ENCODE measurements at regions of chr2 and their contacts with region 1.

Region 1: DNA sequence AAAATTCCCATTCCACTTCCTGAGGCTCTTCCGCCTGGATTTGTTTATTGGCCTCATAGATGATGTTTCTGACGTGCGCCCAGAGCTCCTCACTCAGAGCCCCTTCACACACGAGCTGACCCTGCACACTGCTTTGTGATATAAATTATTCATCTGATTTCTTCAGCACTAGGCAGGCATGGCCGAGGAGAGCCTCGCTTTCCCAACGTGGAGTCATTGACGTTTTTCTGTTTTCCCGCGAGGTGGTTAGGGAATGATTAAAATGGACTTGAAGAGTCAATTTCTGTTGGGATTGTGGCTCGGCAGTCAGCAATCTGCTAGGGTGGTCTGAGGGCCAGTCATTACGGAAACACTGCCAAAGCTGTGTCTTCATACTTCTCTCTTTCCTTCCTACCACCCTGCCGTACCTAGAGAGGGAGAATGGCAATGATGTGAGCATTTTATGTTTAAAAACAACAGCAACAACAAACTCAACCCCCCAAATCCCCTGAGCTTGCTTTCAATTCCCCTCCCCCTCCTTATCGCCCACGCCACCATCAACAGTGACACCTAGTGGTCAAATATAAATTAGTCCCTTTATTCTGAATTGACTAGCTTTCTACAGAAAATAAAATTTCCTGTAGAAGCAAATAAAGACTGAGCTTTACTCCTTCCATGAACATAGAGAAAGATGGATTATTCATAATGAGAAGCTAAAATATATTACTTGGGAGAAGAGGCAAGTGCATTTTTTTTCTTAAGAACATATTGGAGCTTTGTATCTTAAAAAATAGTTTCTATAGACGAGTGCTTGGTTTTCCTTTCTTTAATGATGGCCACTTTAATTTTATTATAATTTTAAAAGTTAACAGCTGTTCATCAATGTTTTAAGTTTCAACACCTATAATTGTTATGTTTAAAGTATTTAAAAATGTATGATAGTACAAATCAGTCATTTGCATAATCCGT is 285.1 kb downstream of the MTX2 start:
- DNase-seq: no peak
- ATAC-seq: peak; percentile 49
- H3K4me3 Mint-ChIP-seq: peak overlapping the region; percentile 71
- H3K27ac Mint-ChIP-seq: no peak overlapping the region
- H3K4me1 Mint-ChIP-seq: peaks cover 11% of the 10 kb centered on the region
- H3K27me3 Mint-ChIP-seq: peaks cover 30% of the 10 kb centered on the region
- CTCF ChIP-seq: peak; percentile 80

Region 2: DNA sequence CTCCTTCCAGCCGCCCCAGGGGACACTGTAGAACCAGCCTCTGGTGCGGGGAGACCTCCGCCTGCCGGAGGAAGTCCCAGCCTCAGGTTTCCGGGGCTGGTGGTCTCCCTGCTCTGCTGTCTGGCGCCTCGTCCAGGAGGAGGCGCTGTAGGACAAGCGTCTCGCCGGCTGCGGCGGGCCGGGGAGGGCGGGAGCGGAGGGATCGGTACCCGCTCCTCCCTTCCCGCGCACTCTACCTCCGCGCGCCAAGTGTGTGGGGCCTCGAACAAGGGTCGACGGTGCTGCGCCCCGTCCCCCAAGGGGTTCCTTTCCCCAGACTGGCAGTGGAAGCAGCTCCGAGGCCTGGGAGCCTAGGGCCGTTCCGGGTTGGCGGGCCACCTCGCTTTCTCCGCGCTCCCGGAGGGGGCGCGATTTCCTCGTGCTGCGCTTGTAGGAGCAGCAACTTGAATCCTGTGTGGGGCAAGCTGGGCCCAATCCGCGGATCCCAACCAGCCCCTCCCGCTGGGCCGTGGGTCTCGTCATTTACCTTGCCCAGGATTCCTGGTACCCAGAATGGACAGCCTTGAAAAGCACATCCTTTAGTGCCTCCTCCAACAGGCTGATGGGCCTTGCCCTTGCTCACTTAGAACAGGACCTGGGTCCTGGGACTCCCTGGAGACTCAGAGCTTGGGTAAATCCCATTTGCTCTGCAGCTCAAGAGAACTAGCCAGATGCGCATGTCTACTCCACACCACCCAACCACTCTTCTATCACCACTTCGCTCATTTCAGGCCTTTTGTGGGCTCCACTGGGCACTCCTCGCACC is 413.7 kb before region 1 on chr2:
- CTCF ChIA-PET with region 1: interaction called, 15 read pairs
- POLR2A ChIA-PET with region 1: no interaction called
- intact Hi-C with region 1: loop called (anchors 1 kb)
- DNase-seq: peak; percentile 39
- ATAC-seq: peak; percentile 73
- H3K4me3 Mint-ChIP-seq: peak overlapping the region; percentile 28
- H3K27ac Mint-ChIP-seq: no peak overlapping the region
- H3K4me1 Mint-ChIP-seq: peaks cover 17% of the 10 kb centered on the region
- H3K27me3 Mint-ChIP-seq: peaks cover 74% of the 10 kb centered on the region
- CTCF ChIP-seq: no peak

Region 3: DNA sequence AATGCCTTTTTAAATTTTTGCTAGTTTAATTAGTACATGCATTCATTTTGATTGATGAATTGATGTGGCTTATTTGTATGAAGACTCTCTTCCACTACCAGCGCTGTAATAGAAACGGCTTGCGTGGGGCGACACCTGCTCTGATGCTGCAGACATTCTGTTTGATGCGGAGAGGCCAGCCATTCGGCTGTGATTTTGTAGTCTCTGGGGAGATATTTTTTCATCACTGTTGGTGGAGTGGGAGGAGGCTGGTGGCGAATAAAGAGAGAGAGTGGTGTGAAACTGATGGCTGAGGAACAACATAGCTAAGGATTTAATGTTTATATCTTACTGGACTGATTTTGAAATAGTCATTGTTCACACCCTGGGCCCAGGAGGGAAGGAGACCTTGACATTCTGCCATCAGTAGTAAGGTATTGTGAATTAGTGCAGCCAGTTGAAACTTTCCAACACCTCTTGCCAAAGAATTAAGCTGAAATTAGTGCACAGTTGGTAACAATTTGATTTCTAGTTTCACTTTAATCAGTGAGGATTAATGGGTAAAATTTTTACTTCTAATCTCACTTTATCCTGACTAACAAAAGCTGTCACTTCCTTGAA is 61.0 kb before region 1 on chr2:
- CTCF ChIA-PET with region 1: interaction called, 5 read pairs
- POLR2A ChIA-PET with region 1: no interaction called
- intact Hi-C with region 1: loop called (anchors 2 kb)
- DNase-seq: no peak
- ATAC-seq: peak; percentile 66
- H3K4me3 Mint-ChIP-seq: peak overlapping the region; percentile 35
- H3K27ac Mint-ChIP-seq: peak overlapping the region; percentile 59
- H3K4me1 Mint-ChIP-seq: peaks cover 44% of the 10 kb centered on the region
- H3K27me3 Mint-ChIP-seq: peaks cover 5% of the 10 kb centered on the region
- CTCF ChIP-seq: no peak

Region 4: GRCh38 chr2:176638167-176639015 is 84.0 kb after region 1 on chr2:
- CTCF ChIA-PET with region 1: no interaction called
- POLR2A ChIA-PET with region 1: no interaction called
- intact Hi-C with region 1: loop called (anchors 1 kb)
- DNase-seq: peak; percentile 24
- ATAC-seq: peak; percentile 79
- H3K4me3 Mint-ChIP-seq: peak overlapping the region; percentile 66
- H3K27ac Mint-ChIP-seq: no peak overlapping the region
- H3K4me1 Mint-ChIP-seq: peaks cover 3% of the 10 kb centered on the region
- H3K27me3 Mint-ChIP-seq: peaks cover 45% of the 10 kb centered on the region
- CTCF ChIP-seq: peak; percentile 64

Measured in activated B cell treated with CpG ODN at 0.5 μM for 24 hours (primary cell).